ENCODE measurements at regions of chr15 and their contacts with region 1.

Region 1: DNA sequence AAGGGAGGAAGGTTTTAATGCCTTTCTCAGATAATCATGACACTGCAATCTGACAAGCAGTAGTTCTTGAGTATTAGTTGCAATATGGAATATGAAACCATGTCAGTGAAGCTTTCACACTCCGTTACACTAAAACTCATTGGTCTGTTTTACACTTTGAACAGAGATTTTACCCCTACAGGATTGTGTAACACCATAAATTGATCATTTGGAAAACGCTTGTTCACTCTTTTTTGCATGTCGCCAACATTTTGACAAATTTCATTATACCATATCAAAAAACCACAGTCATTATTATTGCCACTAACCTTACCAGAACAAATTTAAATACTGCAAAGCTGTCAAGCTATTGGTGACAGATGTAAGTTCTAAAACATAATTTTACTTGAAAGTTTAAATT is 404.8 kb upstream of the THBS1 start:
- DNase-seq: no peak
- H3K4me3 Mint-ChIP-seq: no peak overlapping the region
- H3K27ac Mint-ChIP-seq: no peak overlapping the region
- H3K4me1 Mint-ChIP-seq: no peaks in the 10 kb centered on the region
- H3K27me3 Mint-ChIP-seq: peaks cover 19% of the 10 kb centered on the region

Region 2: GRCh38 chr15:39095218-39095879 is 80.7 kb before region 1 on chr15:
- CTCF ChIA-PET with region 1: no interaction called
- POLR2A ChIA-PET with region 1: no interaction called
- DNase-seq: no peak
- H3K4me3 Mint-ChIP-seq: no peak overlapping the region
- H3K27ac Mint-ChIP-seq: no peak overlapping the region
- H3K4me1 Mint-ChIP-seq: no peaks in the 10 kb centered on the region
- H3K27me3 Mint-ChIP-seq: peaks cover 18% of the 10 kb centered on the region

Region 3: DNA sequence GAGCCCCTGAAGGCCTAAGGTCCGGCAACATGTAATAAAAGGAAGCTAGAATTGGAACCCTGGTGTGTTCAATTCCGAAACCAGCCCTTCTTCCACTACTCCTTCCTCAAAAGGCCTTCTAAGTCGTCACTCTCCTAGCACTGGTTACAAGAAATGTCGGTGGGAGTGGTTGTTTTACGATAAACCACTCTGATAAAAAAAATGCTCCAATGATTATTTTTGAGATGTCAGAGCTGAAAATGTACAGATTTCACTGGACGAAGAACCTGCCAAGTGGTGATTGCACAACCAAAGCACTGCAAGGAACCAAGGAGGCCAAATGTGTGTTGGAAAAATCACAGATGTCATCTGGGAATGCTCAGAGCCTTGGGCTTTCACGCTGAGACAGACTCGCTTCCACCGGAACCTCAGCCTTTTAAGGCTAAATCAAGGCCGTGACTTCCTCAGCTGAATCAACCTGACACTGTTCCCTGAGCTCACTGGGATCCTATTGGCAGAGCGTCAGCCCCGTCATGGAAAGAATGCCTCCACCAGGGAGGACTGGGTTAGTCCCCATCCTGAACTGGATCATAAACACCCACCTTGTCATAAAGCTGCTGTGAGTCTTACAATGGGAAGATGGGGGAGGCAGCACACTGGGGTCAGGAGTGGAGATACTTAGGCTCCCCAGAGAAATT is 296.7 kb after region 1 on chr15:
- CTCF ChIA-PET with region 1: no interaction called
- POLR2A ChIA-PET with region 1: interaction called, 13 read pairs
- DNase-seq: no peak
- H3K4me3 Mint-ChIP-seq: no peak overlapping the region
- H3K27ac Mint-ChIP-seq: no peak overlapping the region
- H3K4me1 Mint-ChIP-seq: no peaks in the 10 kb centered on the region
- H3K27me3 Mint-ChIP-seq: peaks cover 13% of the 10 kb centered on the region